H1 (cell line): ENCODE measurements at regions of chr10 and their contacts with region 1.

Region 1: DNA sequence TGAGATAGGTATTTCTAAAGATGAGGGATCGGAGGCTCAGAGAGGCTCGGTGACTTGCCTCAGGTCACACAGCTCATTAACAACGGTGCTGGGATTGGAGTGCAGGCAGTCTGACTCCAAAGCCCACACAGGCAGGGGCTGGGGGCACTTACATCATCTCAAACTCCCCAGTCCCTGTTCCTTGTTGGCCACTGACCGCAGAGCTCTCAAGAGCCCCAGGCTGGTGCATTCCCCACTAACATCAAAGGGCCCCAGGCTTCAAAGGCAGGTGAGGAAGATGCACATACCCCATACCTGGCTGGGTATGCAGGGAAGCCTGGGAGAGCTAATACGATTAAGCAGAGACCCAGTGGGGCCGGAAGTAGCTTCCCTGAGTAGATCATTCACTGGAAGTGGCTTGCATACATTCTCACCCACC is 13.7 kb upstream of the NODAL start:
- DNase-seq: peak; percentile 78 to 86
- H3K4me3 ChIP-seq: no peak overlapping the region
- H3K27ac ChIP-seq: no peak overlapping the region
- H3K4me1 ChIP-seq: peaks cover 15 to 45% (median 29%) of the 10 kb centered on the region in 4 experiments
- H3K27me3 ChIP-seq: peaks cover 21 to 49% (median 44%) of the 10 kb centered on the region in 4 experiments
- CTCF ChIP-seq: no peak
- EP300 ChIP-seq: peak in 1 of 2 experiments; percentile 91; a peak in 1 of 3 replicates
- POLR2A ChIP-seq: no peak
- RAD21 ChIP-seq: no peak

Region 2: DNA sequence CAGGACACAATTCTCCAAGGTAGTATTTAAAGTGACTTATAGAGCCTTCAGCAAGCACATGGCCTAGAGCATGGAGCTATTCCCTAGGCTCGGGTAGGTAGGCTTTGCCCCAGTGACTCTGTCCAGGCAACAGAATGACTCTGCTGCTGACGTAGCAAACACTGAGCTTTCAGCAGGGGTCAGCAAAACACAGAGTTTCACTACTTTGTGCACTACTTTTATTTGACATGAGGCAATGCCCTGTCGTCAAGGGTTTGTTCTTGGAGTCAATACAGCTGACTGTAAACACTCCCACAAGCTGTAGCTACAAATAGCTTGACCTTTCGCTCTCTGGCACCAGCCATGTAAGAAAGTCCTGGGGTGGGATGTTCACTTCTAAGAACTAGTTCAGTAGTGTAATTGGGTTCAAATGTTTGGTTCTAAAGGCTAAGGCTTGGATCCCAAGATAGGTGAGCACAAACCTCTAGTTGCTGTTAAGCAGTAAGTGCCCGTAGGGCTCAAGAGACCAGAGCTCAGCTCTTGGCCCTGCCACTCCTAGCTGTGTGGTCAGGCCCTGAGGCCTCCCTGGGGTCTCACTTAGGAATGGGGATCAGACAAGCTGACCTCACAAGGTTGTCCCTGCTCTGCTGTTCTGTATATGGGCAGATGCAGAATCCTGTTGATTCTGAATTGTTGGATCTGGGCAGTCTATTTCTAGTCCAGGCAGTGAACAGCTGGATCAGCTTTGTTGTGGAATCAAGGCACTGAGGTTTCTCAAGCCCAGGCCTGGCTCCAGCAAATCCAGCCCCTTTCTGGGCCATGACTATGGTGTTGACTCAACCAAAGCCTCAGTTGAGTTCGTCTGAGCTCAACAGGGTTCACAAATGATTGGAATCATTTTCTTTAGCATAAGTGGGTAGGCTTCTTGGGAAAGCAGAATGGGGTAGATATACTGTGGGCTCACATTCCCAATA is 24.5 kb before region 1 on chr10:
- CTCF ChIA-PET with region 1: interaction called, 67 read pairs
- POLR2A ChIA-PET with region 1: interaction called, 4 read pairs
- DNase-seq: no peak
- H3K4me3 ChIP-seq: no peak overlapping the region
- H3K27ac ChIP-seq: no peak overlapping the region
- H3K4me1 ChIP-seq: no peaks in the 10 kb centered on the region; a peak in 1 of 7 replicates
- H3K27me3 ChIP-seq: no peaks in the 10 kb centered on the region
- CTCF ChIP-seq: peak in 2 of 3 experiments; percentile 30 to 46; a peak in 2 of 4 replicates
- EP300 ChIP-seq: no peak
- POLR2A ChIP-seq: no peak
- RAD21 ChIP-seq: peak; percentile 54 to 66

Region 3: GRCh38 chr10:70440296-70441160 is 14.7 kb before region 1 on chr10:
- CTCF ChIA-PET with region 1: interaction called, 67 read pairs
- POLR2A ChIA-PET with region 1: interaction called, 28 read pairs
- DNase-seq: peak in 1 of 2 experiments; percentile 72
- H3K4me3 ChIP-seq: peak overlapping the region; percentile 23 to 57 (median 44)
- H3K27ac ChIP-seq: no peak overlapping the region
- H3K4me1 ChIP-seq: peaks cover 5 to 20% (median 19%) of the 10 kb centered on the region in 4 experiments
- H3K27me3 ChIP-seq: peaks cover 18 to 43% (median 38%) of the 10 kb centered on the region in 4 experiments
- CTCF ChIP-seq: no peak
- EP300 ChIP-seq: no peak
- POLR2A ChIP-seq: no peak
- RAD21 ChIP-seq: no peak